ENCODE measurements at regions of chr15 and their contacts with region 1.

Region 1: GRCh38 chr15:86300390-86301125 is 220.9 kb downstream of the AGBL1 start:
- DNase-seq: no peak
- H3K4me3 Mint-ChIP-seq: no peak overlapping the region
- H3K27ac Mint-ChIP-seq: no peak overlapping the region
- H3K4me1 Mint-ChIP-seq: no peaks in the 10 kb centered on the region
- H3K27me3 Mint-ChIP-seq: no peaks in the 10 kb centered on the region

Region 2: GRCh38 chr15:86362555-86362954 is 62.0 kb after region 1 on chr15:
- intact Hi-C with region 1: loop called (anchors 10 kb)
- DNase-seq: no peak
- H3K4me3 Mint-ChIP-seq: no peak overlapping the region
- H3K27ac Mint-ChIP-seq: no peak overlapping the region
- H3K4me1 Mint-ChIP-seq: no peaks in the 10 kb centered on the region
- H3K27me3 Mint-ChIP-seq: no peaks in the 10 kb centered on the region

Region 3: GRCh38 chr15:86425746-86426145 is 125.2 kb after region 1 on chr15:
- intact Hi-C with region 1: no loop called
- DNase-seq: no peak
- H3K4me3 Mint-ChIP-seq: no peak overlapping the region
- H3K27ac Mint-ChIP-seq: no peak overlapping the region
- H3K4me1 Mint-ChIP-seq: no peaks in the 10 kb centered on the region
- H3K27me3 Mint-ChIP-seq: no peaks in the 10 kb centered on the region

Measured in activated T-helper 1 cell treated with anti-CD3 and anti-CD28 coated beads, Interleukin-12 subunit alpha, Interleukin-12 subunit beta, Interleukin-2, Interleukin-4 antibody, amounts not matched to agents 30 ng/mL and 10 ng/mL and 1 ng/mL, durations not matched to agents 14 hours and 24 hours and 36 hours (primary cell).